Activated naive CD4-positive, alpha-beta T cell treated with anti-CD3 and anti-CD28 coated beads for 36 hours (primary cell): ENCODE measurements at regions of chr21 and their contacts with region 1.

Region 1: GRCh38 chr21:34073870-34074781 is 748 bp downstream of the MRPS6 start:
- DNase-seq: peak; percentile 24
- H3K4me3 Mint-ChIP-seq: peak overlapping the region; percentile 88
- H3K27ac Mint-ChIP-seq: peak overlapping the region; percentile 86
- H3K4me1 Mint-ChIP-seq: peaks cover 46% of the 10 kb centered on the region
- H3K27me3 Mint-ChIP-seq: no peaks in the 10 kb centered on the region

Region 2: DNA sequence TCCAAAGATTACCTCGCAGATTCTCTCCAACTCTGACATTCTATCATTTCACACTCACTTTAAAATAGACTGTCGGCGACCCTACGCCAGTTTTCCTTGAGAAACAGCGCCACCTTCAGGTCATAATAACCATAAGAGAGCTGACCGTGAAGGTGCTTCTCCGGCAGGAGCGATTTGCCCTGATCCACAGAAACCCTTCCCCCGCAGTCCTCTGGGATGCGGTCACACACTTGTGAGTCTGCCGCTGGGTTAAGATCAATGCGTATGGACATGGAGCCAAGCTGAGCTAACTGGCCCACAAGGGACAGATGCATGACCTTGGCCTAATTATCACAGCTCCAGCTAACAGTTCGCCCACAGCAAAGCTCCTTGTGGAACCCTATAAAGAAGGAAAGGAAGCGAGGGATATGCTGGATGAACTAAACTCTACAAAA is 877.2 kb before region 1 on chr21:
- CTCF ChIA-PET with region 1: no interaction called
- intact Hi-C with region 1: no loop called
- DNase-seq: peak; percentile 72
- H3K4me3 Mint-ChIP-seq: no peak overlapping the region
- H3K27ac Mint-ChIP-seq: no peak overlapping the region
- H3K4me1 Mint-ChIP-seq: peaks cover 18% of the 10 kb centered on the region
- H3K27me3 Mint-ChIP-seq: no peaks in the 10 kb centered on the region

Region 3: DNA sequence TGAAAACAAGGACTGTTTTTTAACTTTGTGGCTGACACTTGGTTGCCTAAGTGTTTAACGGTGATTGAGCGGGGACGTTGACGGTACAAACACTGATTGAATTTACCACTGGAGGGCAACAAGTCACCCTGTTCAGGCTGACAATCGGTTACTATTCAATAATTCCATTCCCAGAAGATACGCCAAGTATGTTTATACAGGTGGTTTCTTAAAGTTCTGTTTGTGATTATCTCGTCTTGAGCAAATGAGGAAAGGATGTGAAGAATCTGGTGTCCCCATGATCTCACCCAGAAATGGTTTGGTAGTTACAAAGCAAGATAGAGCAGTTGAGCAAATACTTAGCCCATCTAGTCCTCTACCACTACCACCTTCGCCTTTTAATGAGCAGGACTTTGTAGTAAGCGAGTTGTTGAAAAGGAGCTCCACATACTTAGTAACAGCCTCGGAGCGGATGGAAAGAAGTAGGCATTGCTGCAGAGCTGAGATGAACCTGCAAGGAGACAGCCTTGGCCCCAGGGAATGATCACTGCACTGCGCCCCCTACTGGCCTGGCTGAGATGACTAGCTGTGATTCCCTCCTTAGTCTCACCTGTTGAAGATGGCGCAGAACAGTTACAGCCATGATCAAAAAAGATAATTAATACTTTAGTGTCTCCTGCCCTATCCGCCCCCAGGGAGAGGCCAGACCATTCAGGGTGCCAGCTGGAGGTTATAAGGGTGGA is 713.1 kb before region 1 on chr21:
- CTCF ChIA-PET with region 1: no interaction called
- intact Hi-C with region 1: no loop called
- DNase-seq: peak; percentile 97
- H3K4me3 Mint-ChIP-seq: peak overlapping the region; percentile 86
- H3K27ac Mint-ChIP-seq: peak overlapping the region; percentile 95
- H3K4me1 Mint-ChIP-seq: peaks cover 17% of the 10 kb centered on the region
- H3K27me3 Mint-ChIP-seq: no peaks in the 10 kb centered on the region

Region 4: DNA sequence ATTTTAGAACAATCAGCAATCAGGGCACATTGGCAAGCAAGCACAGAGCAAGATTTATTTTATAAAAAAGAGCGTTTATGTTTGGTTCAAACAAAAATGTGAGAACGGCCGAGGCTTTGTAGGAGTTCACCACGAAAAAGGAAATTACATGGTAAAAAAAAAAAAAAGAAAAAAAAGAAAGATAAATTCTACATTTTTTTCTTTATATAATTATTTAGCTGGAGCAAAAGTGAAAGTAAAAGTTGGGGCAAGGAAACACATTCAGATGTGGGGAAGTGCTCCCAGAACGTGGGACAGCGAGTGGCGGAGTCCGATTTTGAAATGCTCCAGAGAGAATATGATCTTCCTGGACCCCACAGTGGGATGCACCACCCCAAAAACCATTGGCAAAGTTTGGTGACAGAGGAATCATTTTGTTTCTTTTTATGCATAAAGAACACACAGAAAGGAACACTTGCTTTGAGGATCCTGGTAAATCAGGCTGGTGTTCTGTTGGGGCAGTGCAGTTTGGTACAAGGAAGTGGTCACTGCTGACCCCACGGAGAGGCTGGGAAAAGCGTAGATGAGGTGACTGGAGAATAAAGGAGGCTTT is 142.2 kb before region 1 on chr21:
- CTCF ChIA-PET with region 1: interaction called, 3 read pairs
- intact Hi-C with region 1: loop called (anchors 2 kb)
- DNase-seq: no peak
- H3K4me3 Mint-ChIP-seq: peak overlapping the region; percentile 93
- H3K27ac Mint-ChIP-seq: peak overlapping the region; percentile 99
- H3K4me1 Mint-ChIP-seq: peaks cover 43% of the 10 kb centered on the region
- H3K27me3 Mint-ChIP-seq: no peaks in the 10 kb centered on the region

Region 5: DNA sequence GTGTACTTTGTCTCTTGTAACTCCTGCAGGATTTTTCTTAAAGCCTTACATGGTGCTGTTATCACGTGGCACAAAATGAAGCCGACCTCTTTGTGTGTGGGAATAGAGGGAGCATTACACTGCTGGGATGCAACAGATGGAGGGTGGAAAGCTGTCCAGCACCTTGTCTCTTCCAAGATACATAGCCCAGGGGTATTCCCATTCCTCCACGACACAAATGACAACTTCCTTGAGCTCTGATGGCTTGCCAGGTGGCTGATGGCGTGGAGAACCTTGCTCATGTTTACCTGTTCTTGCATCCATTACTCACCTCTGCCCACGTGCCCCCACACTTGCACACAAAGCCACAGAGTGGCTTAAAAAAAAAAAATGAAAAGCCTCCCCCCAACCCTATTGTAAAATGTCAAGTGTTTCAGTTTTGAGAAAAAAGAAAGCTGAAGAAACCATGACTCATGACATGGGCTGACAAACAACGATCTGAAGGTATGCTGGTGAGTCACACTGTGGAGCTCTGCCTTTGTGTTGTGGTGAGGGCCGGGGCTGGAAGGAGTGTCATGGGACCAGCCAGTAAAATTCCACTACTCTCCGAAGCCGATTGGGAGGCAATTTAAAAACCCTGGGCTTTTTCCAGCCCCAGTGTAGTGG is 126.6 kb before region 1 on chr21:
- CTCF ChIA-PET with region 1: interaction called, 3 read pairs
- intact Hi-C with region 1: loop called (anchors 1 kb)
- DNase-seq: peak; percentile 92
- H3K4me3 Mint-ChIP-seq: peak overlapping the region; percentile 65
- H3K27ac Mint-ChIP-seq: peak overlapping the region; percentile 97
- H3K4me1 Mint-ChIP-seq: peaks cover 77% of the 10 kb centered on the region
- H3K27me3 Mint-ChIP-seq: peaks cover 2% of the 10 kb centered on the region

Region 6: GRCh38 chr21:34091607-34092006 is 17.5 kb after region 1 on chr21:
- CTCF ChIA-PET with region 1: interaction called, 4 read pairs
- intact Hi-C with region 1: loop called (anchors 2 kb)
- DNase-seq: no peak
- H3K4me3 Mint-ChIP-seq: no peak overlapping the region
- H3K27ac Mint-ChIP-seq: no peak overlapping the region
- H3K4me1 Mint-ChIP-seq: peaks cover 44% of the 10 kb centered on the region
- H3K27me3 Mint-ChIP-seq: no peaks in the 10 kb centered on the region

Region 7: DNA sequence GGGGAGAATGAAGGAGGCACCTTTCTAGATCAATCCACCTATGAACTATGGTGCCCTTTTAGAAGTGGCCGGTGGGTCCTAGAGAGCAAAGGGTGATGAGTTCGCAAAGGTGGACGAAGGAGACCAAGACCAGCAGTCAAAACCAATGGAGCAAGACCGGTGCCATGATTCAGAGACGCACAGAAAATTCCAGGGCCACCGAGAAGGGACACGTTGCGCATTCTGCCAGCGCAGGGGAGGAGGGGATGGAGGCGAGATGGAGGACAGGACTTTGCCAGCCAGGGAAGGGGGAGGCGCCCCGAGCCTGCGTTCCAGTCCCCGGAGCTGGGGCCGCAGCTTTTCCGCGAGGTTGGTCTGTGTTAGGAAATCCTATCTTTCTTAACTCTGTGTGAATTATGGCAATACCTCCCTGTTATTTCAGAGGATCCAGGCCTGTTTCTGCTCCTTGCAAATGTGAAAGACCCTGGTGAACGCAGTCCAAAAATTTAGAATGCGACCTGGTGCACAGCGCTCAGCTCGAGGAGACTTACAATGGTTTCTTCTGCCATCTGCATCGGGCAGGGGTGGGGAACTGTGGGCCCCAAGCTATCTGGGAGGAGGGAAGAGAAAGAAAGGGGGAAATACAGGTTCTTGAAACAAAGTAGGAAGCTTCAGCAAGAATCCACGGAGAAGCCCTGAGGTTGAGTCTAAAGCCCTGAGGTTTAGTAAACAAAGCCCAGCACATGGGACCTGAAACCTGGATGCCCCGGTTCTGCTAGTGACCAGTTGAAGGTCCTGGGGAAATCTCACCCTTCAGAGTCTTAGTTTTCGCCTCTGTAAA is 128.6 kb after region 1 on chr21:
- CTCF ChIA-PET with region 1: interaction called, 5 read pairs
- intact Hi-C with region 1: loop called (anchors 2 kb)
- DNase-seq: no peak
- H3K4me3 Mint-ChIP-seq: peak overlapping the region; percentile 61
- H3K27ac Mint-ChIP-seq: no peak overlapping the region
- H3K4me1 Mint-ChIP-seq: peaks cover 43% of the 10 kb centered on the region
- H3K27me3 Mint-ChIP-seq: no peaks in the 10 kb centered on the region

Region 8: DNA sequence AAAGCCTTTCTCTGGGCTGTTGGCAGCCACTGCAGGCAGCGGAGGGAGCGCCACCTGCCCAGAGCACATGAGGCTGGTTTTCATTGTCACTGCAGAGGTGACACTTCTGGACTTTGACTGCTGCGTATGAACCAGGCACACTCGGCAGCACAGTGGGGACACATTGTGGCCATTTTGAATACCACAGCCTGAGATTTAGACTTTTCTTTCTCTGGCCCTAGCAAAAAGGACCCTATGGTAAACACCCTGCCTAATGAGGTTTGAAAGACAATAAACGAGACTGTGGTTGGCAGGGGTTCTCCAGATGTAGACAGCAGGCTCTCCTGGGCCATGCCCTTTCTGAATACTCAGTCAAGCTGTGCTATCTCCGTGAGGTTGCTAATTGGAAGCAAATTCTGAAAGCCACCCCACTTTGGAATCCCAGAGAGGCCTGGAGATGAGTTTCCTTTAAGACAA is 277.7 kb after region 1 on chr21:
- CTCF ChIA-PET with region 1: interaction called, 6 read pairs
- intact Hi-C with region 1: loop called (anchors 2 kb)
- DNase-seq: peak; percentile 45
- H3K4me3 Mint-ChIP-seq: no peak overlapping the region
- H3K27ac Mint-ChIP-seq: no peak overlapping the region
- H3K4me1 Mint-ChIP-seq: peaks cover 3% of the 10 kb centered on the region
- H3K27me3 Mint-ChIP-seq: peaks cover 3% of the 10 kb centered on the region